Activated B cell treated with CpG ODN at 0.5 μM for 24 hours (primary cell): ENCODE measurements at regions of chr9 and their contacts with region 1.

Region 1: DNA sequence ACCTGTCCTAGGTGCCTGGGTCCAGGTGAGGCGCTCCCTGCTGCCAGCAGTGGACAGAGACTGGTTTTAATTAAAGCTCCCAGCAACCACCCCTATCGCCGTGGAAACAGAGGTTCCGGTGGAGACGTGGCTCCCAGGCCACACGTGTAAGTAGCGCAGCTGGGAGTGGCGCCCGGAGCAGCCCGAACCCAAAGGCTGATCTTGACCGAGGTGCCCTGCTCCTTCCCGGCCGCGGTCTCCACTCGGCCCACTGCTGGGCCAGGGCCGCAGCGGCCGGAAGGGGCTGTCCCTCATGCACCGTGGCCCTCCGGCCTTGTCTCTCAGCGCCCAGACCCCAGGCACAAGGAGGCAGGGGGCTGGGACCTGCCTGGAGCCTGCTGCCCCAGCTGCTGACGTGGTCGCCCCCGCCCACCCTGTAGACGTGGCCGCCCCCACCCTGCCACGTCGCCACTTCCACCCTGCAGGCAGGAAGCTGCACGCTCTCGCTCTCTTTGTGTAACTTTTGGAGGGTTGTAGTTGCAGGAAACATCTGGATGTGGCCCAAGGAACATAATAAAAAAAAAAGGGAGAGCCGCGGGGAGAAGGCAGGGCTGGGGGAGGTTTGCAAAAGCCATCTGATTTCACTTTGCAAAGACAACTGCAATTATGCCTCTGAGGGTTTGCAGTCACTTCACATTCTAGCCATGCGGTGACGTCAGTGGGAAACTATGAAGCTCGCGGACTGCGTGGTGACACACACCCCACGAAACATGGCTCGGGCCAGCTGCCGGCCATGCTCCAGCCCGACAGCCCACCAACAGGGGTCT is 129.9 kb downstream of the RXRA start:
- DNase-seq: peak; percentile 51
- ATAC-seq: peak; percentile 91
- H3K4me3 Mint-ChIP-seq: peak overlapping the region; percentile 88
- H3K27ac Mint-ChIP-seq: peak overlapping the region; percentile 84
- H3K4me1 Mint-ChIP-seq: peaks cover 17% of the 10 kb centered on the region
- H3K27me3 Mint-ChIP-seq: no peaks in the 10 kb centered on the region
- CTCF ChIP-seq: no peak

Region 2: GRCh38 chr9:134475011-134475790 is 19.1 kb after region 1 on chr9:
- CTCF ChIA-PET with region 1: interaction called, 3 read pairs
- POLR2A ChIA-PET with region 1: interaction called, 6 read pairs
- intact Hi-C with region 1: loop called (anchors 1 kb)
- DNase-seq: peak; percentile 29
- ATAC-seq: peak; percentile 91
- H3K4me3 Mint-ChIP-seq: no peak overlapping the region
- H3K27ac Mint-ChIP-seq: peak overlapping the region; percentile 86
- H3K4me1 Mint-ChIP-seq: peaks cover 10% of the 10 kb centered on the region
- H3K27me3 Mint-ChIP-seq: no peaks in the 10 kb centered on the region
- CTCF ChIP-seq: no peak